PC-3 (cell line): ENCODE measurements at regions of chr19 and their contacts with region 1.

Region 1: GRCh38 chr19:4831304-4831978 is at the start of gene TICAM1:
- DNase-seq: peak; percentile 63
- ATAC-seq: peak; percentile 90
- H3K4me3 ChIP-seq: peak within 1 kb of the TSS; percentile 92
- H3K27ac ChIP-seq: peak within 1 kb of the TSS; percentile 56
- H3K4me1 ChIP-seq: peaks cover 13% of the 10 kb centered on the region; the same call in 1 of the 2 replicates
- H3K27me3 ChIP-seq: no peaks in the 10 kb centered on the region
- CTCF ChIP-seq: no peak
- total RNA-seq, gene TICAM1: 6.5 and 17.0 TPM in 2 replicates

Region 2: GRCh38 chr19:4851551-4852290 is 20.3 kb after region 1 on chr19:
- CTCF ChIA-PET with region 1: interaction called, 10 read pairs
- POLR2A ChIA-PET with region 1: no interaction called
- intact Hi-C with region 1: no loop called
- DNase-seq: peak; percentile 67
- ATAC-seq: peak; percentile 90
- H3K4me3 ChIP-seq: no peak overlapping the region
- H3K27ac ChIP-seq: no peak overlapping the region
- H3K4me1 ChIP-seq: no peaks in the 10 kb centered on the region
- H3K27me3 ChIP-seq: no peaks in the 10 kb centered on the region
- CTCF ChIP-seq: peak; percentile 95